Activated T-helper 1 cell treated with anti-CD3 and anti-CD28 coated beads, Interleukin-12 subunit alpha, Interleukin-12 subunit beta, Interleukin-2, Interleukin-4 antibody, amounts not matched to agents 30 ng/mL and 10 ng/mL and 1 ng/mL, durations not matched to agents 14 hours and 24 hours and 36 hours (primary cell): ENCODE measurements at regions of chr2 and their contacts with region 1.

Region 1: DNA sequence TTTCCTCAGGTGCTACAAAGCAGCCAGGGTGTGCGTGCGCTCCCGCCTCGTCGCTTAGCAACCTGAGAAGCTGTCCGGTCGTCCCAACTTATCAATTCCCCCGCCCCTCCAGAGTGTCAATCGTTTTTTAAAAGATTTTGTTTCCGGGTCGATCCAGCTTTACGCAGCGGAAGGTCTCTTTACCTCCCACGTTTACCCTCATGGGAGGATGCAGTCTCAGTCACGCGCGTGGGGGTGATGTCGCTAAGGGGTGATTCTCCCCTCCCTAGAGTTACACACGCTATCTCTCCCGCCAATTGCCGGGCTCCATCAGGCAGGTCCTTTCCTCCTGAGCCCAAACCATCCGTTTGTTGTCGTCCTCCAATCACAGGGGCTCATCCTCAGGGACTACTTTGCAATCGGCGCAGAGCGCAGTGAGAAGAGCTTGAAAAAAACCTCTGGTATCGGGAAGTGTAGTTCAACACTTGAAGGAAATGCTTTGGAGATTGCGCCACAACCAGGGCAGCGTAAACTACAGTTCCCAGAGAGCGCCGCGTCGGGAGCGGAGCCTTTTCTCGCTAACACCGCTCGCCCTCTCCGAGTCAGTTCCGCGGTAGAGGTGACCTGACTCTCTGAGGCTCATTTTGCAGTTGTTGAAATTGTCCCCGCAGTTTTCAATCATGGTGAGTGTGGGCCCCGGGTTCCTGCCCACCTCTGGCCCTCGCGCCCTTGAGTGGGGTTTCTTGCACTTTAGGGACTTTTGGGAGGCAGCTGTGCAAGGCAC is at the starts of genes MDH1 and WDPCP:
- DNase-seq: peak; percentile 90
- H3K4me3 Mint-ChIP-seq: peak within 1 kb of the TSS; percentile 97
- H3K27ac Mint-ChIP-seq: peak within 1 kb of the TSS; percentile 90
- H3K4me1 Mint-ChIP-seq: peaks cover 38% of the 10 kb centered on the region
- H3K27me3 Mint-ChIP-seq: no peaks in the 10 kb centered on the region
- total RNA-seq, gene MDH1: 186 and 197 TPM in 2 replicates
- total RNA-seq, gene WDPCP: 5.2 and 7.7 TPM in 2 replicates

Region 2: GRCh38 chr2:61694312-61695274 is 1894.0 kb before region 1 on chr2:
- intact Hi-C with region 1: loop called (anchors 5 kb)
- DNase-seq: peak; percentile 80
- H3K4me3 Mint-ChIP-seq: peak overlapping the region; percentile 89
- H3K27ac Mint-ChIP-seq: peak overlapping the region; percentile 76
- H3K4me1 Mint-ChIP-seq: peaks cover 14% of the 10 kb centered on the region
- H3K27me3 Mint-ChIP-seq: peaks cover 2% of the 10 kb centered on the region

Region 3: DNA sequence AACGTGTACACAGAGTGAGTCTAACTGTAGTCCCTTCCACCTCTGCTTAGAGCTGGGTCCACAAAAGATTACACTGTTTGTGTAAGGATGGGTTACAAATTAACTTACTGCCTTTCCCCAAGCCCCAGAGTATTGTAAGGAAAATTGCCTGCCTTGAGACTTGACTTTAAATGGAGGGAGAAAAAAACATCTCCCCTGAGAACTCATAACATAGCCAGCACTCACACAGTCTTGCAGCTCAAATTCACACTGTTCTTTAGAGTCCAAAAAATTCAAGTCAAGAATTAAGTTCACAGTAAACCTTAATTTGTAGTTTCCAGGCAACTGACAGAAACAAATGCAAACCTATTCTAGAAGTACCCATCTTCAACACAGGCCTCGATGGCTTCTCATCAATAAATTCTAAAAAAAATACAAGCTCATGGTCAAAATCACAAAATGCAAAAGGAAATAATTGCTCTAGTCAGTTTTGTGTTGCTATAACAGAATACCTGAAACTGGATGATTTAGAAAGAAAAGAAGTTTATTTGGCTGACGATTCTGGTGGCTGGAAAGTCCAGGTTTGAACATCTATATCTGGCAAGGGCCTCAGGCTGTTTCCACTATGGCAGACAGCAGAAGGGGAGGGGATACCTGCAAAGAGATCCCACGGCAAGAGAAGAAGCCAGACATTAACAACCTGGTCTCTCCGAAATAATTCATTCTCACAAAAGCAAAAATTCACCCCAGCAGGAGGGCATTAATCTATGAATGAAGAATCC is 1048.0 kb before region 1 on chr2:
- intact Hi-C with region 1: no loop called
- DNase-seq: no peak
- H3K4me3 Mint-ChIP-seq: no peak overlapping the region
- H3K27ac Mint-ChIP-seq: no peak overlapping the region
- H3K4me1 Mint-ChIP-seq: no peaks in the 10 kb centered on the region
- H3K27me3 Mint-ChIP-seq: no peaks in the 10 kb centered on the region

Region 4: GRCh38 chr2:63841254-63842022 is 252.9 kb after region 1 on chr2 and contains the start of gene UGP2:
- intact Hi-C with region 1: loop called (anchors 1 kb)
- DNase-seq: peak; percentile 83
- H3K4me3 Mint-ChIP-seq: peak within 1 kb of the TSS; percentile 99
- H3K27ac Mint-ChIP-seq: peak within 1 kb of the TSS; percentile 99
- H3K4me1 Mint-ChIP-seq: peaks cover 47% of the 10 kb centered on the region
- H3K27me3 Mint-ChIP-seq: no peaks in the 10 kb centered on the region
- total RNA-seq, gene UGP2: 60.3 and 65.9 TPM in 2 replicates

Region 5: GRCh38 chr2:64144057-64145013 is 555.8 kb after region 1 on chr2 and contains the start of gene PELI1:
- intact Hi-C with region 1: loop called (anchors 1 kb)
- DNase-seq: peak; percentile 90
- H3K4me3 Mint-ChIP-seq: peak within 1 kb of the TSS; percentile 98
- H3K27ac Mint-ChIP-seq: peak within 1 kb of the TSS; percentile 97
- H3K4me1 Mint-ChIP-seq: peaks cover 28% of the 10 kb centered on the region
- H3K27me3 Mint-ChIP-seq: peaks cover 3% of the 10 kb centered on the region
- total RNA-seq, gene PELI1: 47.1 and 50.4 TPM in 2 replicates

Region 6: DNA sequence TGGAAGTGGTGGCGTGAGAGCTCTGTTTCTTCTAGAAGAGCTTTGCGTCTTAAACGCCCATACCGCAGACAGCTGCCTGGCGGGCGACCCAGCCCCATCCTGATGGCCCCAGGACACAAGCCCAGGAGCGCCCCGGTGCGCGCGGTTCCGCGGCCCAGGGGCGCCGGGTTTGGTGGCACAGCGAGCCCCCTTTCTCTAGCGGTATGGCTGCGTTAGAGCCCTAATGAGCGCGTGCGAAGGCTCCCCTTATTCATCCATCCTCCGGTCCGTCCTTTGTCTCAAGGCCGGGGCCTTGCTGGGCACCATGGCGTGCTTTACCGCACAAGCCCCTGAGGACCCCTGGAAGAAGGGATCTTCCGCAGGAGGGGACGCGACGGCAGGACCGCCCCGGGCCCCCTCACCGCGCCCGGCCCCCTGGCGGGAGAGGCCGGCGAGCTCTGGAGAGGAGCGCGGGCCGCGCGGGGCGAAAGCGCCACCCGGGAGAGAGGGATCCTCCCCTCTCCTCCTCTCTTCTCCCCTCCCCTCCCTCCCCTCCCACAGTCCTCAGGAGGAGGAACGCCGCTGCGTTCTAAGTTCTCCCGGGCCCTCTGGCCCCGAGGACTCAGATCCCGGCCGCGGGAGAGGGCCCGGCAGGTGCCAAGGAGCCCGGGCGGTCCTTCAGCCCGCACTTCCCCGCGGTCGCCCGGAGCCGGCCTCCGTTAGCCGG is 1400.0 kb after region 1 on chr2:
- intact Hi-C with region 1: loop called (anchors 2 kb)
- DNase-seq: peak; percentile 75
- H3K4me3 Mint-ChIP-seq: peak overlapping the region; percentile 88
- H3K27ac Mint-ChIP-seq: peak overlapping the region; percentile 92
- H3K4me1 Mint-ChIP-seq: peaks cover 79% of the 10 kb centered on the region
- H3K27me3 Mint-ChIP-seq: peaks cover 11% of the 10 kb centered on the region

Region 7: GRCh38 chr2:65227425-65228262 is 1639.1 kb after region 1 on chr2 and contains the start of gene ACTR2:
- intact Hi-C with region 1: loop called (anchors 1 kb)
- DNase-seq: peak; percentile 95
- H3K4me3 Mint-ChIP-seq: peak within 1 kb of the TSS; percentile 98
- H3K27ac Mint-ChIP-seq: peak within 1 kb of the TSS; percentile 99
- H3K4me1 Mint-ChIP-seq: peaks cover 36% of the 10 kb centered on the region
- H3K27me3 Mint-ChIP-seq: no peaks in the 10 kb centered on the region
- total RNA-seq, gene ACTR2: 285 and 295 TPM in 2 replicates